ENCODE measurements at regions of chr4 and their contacts with region 1.

Region 1: DNA sequence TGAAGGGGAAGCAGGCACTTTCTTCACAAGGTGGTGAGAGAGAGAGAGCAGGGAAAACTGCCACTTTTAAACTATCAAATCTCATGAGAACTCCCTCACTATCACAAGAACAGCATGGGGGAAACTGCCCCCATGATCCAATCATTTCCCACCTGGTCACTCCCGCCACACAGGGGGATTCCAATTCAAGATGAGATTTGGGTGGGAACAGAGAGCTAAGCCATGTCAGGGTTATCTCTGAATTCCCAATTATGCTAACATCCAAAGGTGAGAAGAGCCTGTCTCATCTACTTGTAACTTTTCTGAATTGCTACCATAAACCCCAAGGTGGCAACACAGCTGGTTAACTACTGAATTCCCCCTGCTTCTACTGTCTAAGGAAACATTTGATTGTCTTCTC is 758.5 kb downstream of the ADGRL3 start:
- DNase-seq: no peak
- H3K4me3 ChIP-seq: no peak overlapping the region
- H3K4me3 Mint-ChIP-seq: no peak overlapping the region
- H3K27ac ChIP-seq: no peak overlapping the region
- H3K27ac Mint-ChIP-seq: no peak overlapping the region
- H3K4me1 ChIP-seq: no peaks in the 10 kb centered on the region
- H3K4me1 Mint-ChIP-seq: no peaks in the 10 kb centered on the region
- H3K27me3 ChIP-seq: no peaks in the 10 kb centered on the region
- H3K27me3 Mint-ChIP-seq: peaks cover 0 to 5% (median 0%) of the 10 kb centered on the region in 3 donors
- CTCF ChIP-seq: no peak

Region 2: GRCh38 chr4:62222121-62222520 is 263.5 kb after region 1 on chr4:
- intact Hi-C with region 1: loop called in 1 of 2 experiments (anchors 5 kb)
- DNase-seq: no peak
- H3K4me3 ChIP-seq: no peak overlapping the region
- H3K4me3 Mint-ChIP-seq: no peak overlapping the region
- H3K27ac ChIP-seq: no peak overlapping the region
- H3K27ac Mint-ChIP-seq: no peak overlapping the region
- H3K4me1 ChIP-seq: no peaks in the 10 kb centered on the region
- H3K4me1 Mint-ChIP-seq: no peaks in the 10 kb centered on the region
- H3K27me3 ChIP-seq: no peaks in the 10 kb centered on the region
- H3K27me3 Mint-ChIP-seq: no peaks in the 10 kb centered on the region
- CTCF ChIP-seq: no peak

Measured in CD14-positive monocyte (primary cell).